B cell (primary cell): ENCODE measurements at regions of chr7 and their contacts with region 1.

Region 1: GRCh38 chr7:140209866-140210609 is 33.3 kb upstream of the KDM7A start:
- DNase-seq: peak; percentile 92
- ATAC-seq: peak; percentile 94
- H3K4me3 ChIP-seq: peak overlapping the region in 3 of 5 experiments; percentile 4 to 52 (median 36)
- H3K4me3 Mint-ChIP-seq: peak overlapping the region; percentile 85
- H3K27ac ChIP-seq: peak overlapping the region; percentile 86 to 94
- H3K27ac Mint-ChIP-seq: peak overlapping the region; percentile 100
- H3K4me1 ChIP-seq: peaks cover 85 to 88% of the 10 kb centered on the region in 2 donors
- H3K4me1 Mint-ChIP-seq: peaks cover 84% of the 10 kb centered on the region
- H3K27me3 ChIP-seq: no peaks in the 10 kb centered on the region
- H3K27me3 Mint-ChIP-seq: no peaks in the 10 kb centered on the region
- CTCF ChIP-seq: no peak

Region 2: DNA sequence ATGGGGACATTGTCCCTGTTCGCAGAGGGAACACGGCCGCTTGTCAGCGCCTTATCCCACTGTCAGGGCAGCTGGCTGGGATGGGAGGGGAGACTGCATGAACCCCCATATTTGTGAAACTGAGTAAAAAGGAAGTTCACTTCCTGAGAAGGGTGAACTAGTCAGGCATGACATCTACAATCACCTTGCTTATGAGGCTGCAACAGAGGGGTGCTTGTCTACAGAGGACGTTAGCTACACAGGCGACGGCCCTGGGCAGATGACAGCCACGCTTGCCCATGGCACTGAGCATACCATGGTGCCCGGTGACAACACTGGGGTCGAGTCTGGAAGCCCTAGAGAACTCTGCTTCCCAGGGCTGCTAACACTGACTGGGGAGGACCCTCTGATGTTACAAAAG is 12.8 kb after region 1 on chr7:
- CTCF ChIA-PET with region 1: interaction called, 6 read pairs
- POLR2A ChIA-PET with region 1: interaction called, 65 read pairs
- intact Hi-C with region 1: loop called (anchors 1 kb)
- DNase-seq: peak; percentile 78
- ATAC-seq: peak; percentile 97
- H3K4me3 ChIP-seq: peak overlapping the region in 4 of 5 experiments; percentile 8 to 22 (median 17)
- H3K4me3 Mint-ChIP-seq: peak overlapping the region; percentile 81
- H3K27ac ChIP-seq: peak overlapping the region; percentile 62 to 64
- H3K27ac Mint-ChIP-seq: peak overlapping the region; percentile 94
- H3K4me1 ChIP-seq: peaks cover 50 to 65% of the 10 kb centered on the region in 2 donors
- H3K4me1 Mint-ChIP-seq: peaks cover 49% of the 10 kb centered on the region
- H3K27me3 ChIP-seq: no peaks in the 10 kb centered on the region
- H3K27me3 Mint-ChIP-seq: no peaks in the 10 kb centered on the region
- CTCF ChIP-seq: no peak

Region 3: GRCh38 chr7:140456551-140457051 is 246.6 kb after region 1 on chr7:
- CTCF ChIA-PET with region 1: no interaction called
- POLR2A ChIA-PET with region 1: no interaction called
- intact Hi-C with region 1: no loop called
- DNase-seq: no peak
- ATAC-seq: no peak
- H3K4me3 ChIP-seq: no peak overlapping the region
- H3K4me3 Mint-ChIP-seq: no peak overlapping the region
- H3K27ac ChIP-seq: no peak overlapping the region
- H3K27ac Mint-ChIP-seq: no peak overlapping the region
- H3K4me1 ChIP-seq: no peaks in the 10 kb centered on the region
- H3K4me1 Mint-ChIP-seq: peaks cover 4% of the 10 kb centered on the region
- H3K27me3 ChIP-seq: no peaks in the 10 kb centered on the region
- H3K27me3 Mint-ChIP-seq: no peaks in the 10 kb centered on the region
- CTCF ChIP-seq: no peak